ENCODE measurements at regions of chr2 and their contacts with region 1.

Region 1: DNA sequence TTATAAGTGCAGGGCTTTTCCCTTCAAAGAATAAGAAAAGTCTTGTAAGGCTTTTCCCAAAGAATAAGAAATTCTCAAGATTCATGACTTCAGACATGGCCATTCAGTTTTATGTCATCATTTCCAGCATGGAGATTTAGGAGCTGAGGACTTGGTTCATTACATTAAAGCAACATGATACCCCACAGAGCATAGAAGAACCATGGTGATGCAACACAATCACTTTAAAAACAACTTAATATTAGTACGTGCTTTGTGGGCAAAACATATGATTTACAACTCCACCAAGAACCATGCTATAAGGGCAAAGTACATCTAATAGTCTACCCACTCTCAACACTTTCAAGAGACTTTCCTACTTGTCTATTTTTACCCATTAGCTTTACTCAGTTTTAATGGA is 214.4 kb downstream of the SRBD1 start:
- DNase-seq: no peak
- H3K4me3 Mint-ChIP-seq: no peak overlapping the region
- H3K27ac Mint-ChIP-seq: no peak overlapping the region
- H3K4me1 Mint-ChIP-seq: no peaks in the 10 kb centered on the region
- H3K27me3 Mint-ChIP-seq: no peaks in the 10 kb centered on the region

Region 2: DNA sequence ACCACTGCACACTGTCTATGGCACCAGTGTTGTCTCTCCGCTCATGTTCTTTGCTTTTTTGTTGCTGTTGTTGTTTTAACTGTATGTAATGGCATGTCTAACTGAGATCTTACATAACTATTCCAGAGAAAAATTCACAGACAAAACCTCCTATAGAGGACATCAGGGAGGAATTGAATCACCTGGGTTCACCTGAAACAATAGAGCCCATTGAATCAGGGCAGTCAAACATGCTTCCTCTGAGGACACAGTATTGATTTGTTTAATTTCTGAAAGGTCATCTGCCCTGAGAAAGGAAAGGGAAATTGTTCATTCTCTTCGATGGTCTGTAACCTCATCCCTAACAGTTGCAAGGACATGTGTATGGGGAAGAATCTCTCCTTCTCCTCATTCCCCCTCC is 23.1 kb before region 1 on chr2:
- intact Hi-C with region 1: loop called (anchors 2 kb)
- DNase-seq: no peak
- H3K4me3 Mint-ChIP-seq: no peak overlapping the region
- H3K27ac Mint-ChIP-seq: no peak overlapping the region
- H3K4me1 Mint-ChIP-seq: no peaks in the 10 kb centered on the region
- H3K27me3 Mint-ChIP-seq: peaks cover 4% of the 10 kb centered on the region

Region 3: DNA sequence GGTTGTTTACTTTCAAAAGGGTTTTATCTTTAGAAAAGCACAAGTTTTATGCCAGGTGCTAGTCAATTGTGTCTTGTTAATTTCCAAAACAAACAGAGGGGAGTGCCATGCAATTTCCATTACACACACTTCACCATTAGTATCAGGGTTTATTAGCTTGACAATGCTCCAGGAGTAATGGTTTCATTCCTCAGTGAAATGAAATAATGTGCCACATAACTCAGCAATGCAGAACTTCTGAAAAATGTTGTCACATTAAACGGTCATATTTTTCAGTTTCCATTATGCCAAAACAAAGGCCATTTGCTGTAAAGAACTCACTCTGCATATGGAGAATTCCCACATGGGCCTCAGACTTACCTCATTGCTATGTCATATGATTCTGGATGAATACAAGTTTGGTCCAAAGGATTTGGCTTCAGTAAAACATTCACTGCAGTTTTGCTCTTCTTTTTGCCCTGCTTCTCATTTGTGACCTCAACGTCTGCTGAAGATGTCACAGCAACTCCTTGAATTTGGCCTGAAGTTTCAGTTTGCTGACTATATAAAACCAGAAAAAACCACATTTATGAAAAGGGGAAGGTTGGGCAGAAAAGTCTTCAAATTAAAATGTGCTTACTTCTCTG is 16.2 kb after region 1 on chr2:
- intact Hi-C with region 1: no loop called
- DNase-seq: no peak
- H3K4me3 Mint-ChIP-seq: no peak overlapping the region
- H3K27ac Mint-ChIP-seq: no peak overlapping the region
- H3K4me1 Mint-ChIP-seq: no peaks in the 10 kb centered on the region
- H3K27me3 Mint-ChIP-seq: no peaks in the 10 kb centered on the region

Measured in activated T-helper 1 cell treated with anti-CD3 and anti-CD28 coated beads, Interleukin-12 subunit alpha, Interleukin-12 subunit beta, Interleukin-2, Interleukin-4 antibody, amounts not matched to agents 30 ng/mL and 10 ng/mL and 1 ng/mL, durations not matched to agents 14 hours and 24 hours and 36 hours (primary cell).